HepG2 (cell line): ENCODE measurements at regions of chr3 and their contacts with region 1.

Region 1: DNA sequence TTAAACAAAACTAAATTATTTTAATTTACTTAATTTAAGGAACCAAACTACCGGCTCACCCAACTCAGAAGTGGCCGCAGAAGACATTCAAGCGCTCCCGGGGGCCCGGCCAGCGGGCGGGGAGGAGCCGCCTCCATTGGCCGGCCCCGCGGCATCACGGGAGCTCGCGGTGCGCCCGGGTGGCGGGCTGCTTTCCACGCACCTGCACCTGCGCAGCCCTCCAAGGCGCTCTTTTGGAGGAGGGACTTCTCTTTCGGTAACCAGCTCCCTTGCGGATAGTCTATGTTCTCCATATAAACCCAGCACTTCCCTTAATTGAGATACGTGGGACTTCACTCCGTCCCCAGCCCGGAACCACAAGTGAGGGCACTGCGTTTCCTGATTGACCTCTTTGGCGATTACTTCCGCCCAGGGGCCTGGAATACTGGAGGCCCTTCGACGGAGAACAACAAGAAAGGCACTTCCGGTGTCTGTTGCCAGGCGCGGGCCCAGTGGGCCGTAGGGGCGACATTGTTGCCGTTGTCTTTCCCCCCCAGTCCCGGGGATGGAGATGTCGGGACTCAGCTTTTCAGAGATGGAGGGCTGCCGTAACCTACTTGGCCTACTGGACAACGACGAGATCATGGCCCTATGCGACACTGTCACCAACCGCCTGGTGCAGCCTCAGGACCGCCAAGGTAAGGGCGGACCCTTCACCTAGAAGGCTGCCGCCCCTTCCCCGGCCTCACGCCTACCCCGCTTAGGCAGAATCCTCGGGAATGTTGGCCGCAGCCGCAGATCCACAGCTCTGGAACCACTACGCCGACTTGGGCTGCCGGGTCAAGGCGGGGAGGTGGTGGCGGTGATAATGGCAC is at the start of gene C3orf38:
- DNase-seq: peak; percentile 92
- ATAC-seq: peak; percentile 97
- H3K4me3 ChIP-seq: peak within 1 kb of the TSS; percentile 72 to 96 (median 88)
- H3K27ac ChIP-seq: peak within 1 kb of the TSS; percentile 98
- H3K4me1 ChIP-seq: peaks cover 37% of the 10 kb centered on the region
- H3K27me3 ChIP-seq: no peaks in the 10 kb centered on the region; a peak in 1 of 5 replicates
- CTCF ChIP-seq: no peak
- EP300 ChIP-seq: no peak; a peak in 1 of 4 replicates
- POLR2A ChIP-seq: peak; percentile 72 to 75
- RAD21 ChIP-seq: no peak
- total RNA-seq, gene C3orf38: 17.5 and 27.1 TPM in 2 replicates

Region 2: DNA sequence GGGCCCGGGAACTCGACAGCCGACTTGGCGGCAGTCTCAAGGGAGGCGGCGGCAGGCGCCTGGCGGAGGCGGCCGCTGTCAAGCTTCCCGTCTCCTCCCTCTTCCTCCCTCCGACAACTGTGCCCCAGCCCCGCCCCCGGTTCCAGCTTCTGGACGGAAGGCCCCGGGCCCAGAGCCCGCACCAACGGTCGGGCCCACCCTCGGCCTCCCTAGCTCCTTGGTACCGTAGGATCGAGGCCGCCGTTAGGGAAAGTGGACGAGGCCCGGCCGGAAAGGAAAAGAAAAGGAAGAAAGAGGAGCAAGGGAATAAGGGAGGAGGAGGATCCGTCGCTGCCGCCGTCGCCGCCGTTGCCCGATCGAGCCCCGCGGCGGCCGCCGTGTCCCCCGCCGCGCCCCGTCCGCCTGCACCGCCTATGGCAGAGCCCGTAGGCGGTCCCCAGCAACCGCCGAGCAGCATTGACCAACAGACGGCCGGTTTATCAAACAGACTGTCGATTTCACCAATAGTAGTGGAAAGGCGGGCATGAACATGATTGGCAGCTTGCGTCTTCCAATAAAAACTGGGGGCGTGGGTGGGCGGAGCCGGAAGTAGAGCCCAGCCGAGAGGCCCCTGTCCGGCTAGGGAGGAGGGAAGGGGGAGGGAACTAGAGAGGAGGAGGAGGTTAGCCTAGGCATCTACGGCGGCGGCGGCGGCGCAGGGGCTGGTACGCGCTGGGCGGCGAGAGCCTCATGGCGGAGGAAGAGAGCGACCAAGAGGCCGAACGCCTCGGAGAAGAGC is 91.0 kb before region 1 on chr3 and contains the starts of genes CGGBP1 and ZNF654:
- CTCF ChIA-PET with region 1: no interaction called
- POLR2A ChIA-PET with region 1: interaction called, 19 read pairs
- in situ Hi-C with region 1: loop called (anchors 5 kb)
- intact Hi-C with region 1: no loop called
- DNase-seq: peak; percentile 97
- ATAC-seq: peak; percentile 96
- H3K4me3 ChIP-seq: peak within 1 kb of the TSS; percentile 80 to 95 (median 91)
- H3K27ac ChIP-seq: peak within 1 kb of the TSS; percentile 88
- H3K4me1 ChIP-seq: peaks cover 30% of the 10 kb centered on the region
- H3K27me3 ChIP-seq: no peaks in the 10 kb centered on the region; a peak in 1 of 5 replicates
- CTCF ChIP-seq: no peak
- EP300 ChIP-seq: no peak; a peak in 1 of 4 replicates
- POLR2A ChIP-seq: peak; percentile 67 to 93
- RAD21 ChIP-seq: no peak
- total RNA-seq, gene CGGBP1: 38.9 and 45.7 TPM in 2 replicates
- total RNA-seq, gene ZNF654: 4.1 and 5.3 TPM in 2 replicates

Region 3: GRCh38 chr3:88189361-88189810 is 39.6 kb after region 1 on chr3:
- CTCF ChIA-PET with region 1: no interaction called
- POLR2A ChIA-PET with region 1: interaction called, 14 read pairs
- in situ Hi-C with region 1: no loop called
- intact Hi-C with region 1: loop called (anchors 2 kb)
- DNase-seq: peak; percentile 85
- ATAC-seq: peak; percentile 92
- H3K4me3 ChIP-seq: peak overlapping the region; percentile 62 to 72 (median 70)
- H3K27ac ChIP-seq: no peak overlapping the region
- H3K4me1 ChIP-seq: peaks cover 14% of the 10 kb centered on the region
- H3K27me3 ChIP-seq: 0 out of 5 replicates have a peak, but pooled peaks cover 0 to 2% of the 10 kb centered on the region in 2 experiments
- CTCF ChIP-seq: no peak
- EP300 ChIP-seq: no peak
- POLR2A ChIP-seq: peak; percentile 25 to 41; a peak in 2 of 4 replicates
- RAD21 ChIP-seq: no peak

Region 4: GRCh38 chr3:88219138-88219792 is 69.5 kb after region 1 on chr3:
- CTCF ChIA-PET with region 1: no interaction called
- POLR2A ChIA-PET with region 1: no interaction called
- in situ Hi-C with region 1: no loop called
- intact Hi-C with region 1: no loop called
- DNase-seq: peak; percentile 69
- ATAC-seq: peak; percentile 99
- H3K4me3 ChIP-seq: no peak overlapping the region; a peak in 1 of 6 replicates
- H3K27ac ChIP-seq: no peak overlapping the region
- H3K4me1 ChIP-seq: no peaks in the 10 kb centered on the region
- H3K27me3 ChIP-seq: no peaks in the 10 kb centered on the region
- CTCF ChIP-seq: peak; percentile 84
- EP300 ChIP-seq: no peak
- POLR2A ChIP-seq: no peak
- RAD21 ChIP-seq: peak; percentile 50; the same call in 1 of the 2 replicates